Ascending aorta (tissue), 2 donors: ENCODE measurements at regions of chr16 and their contacts with region 1.

Region 1: GRCh38 chr16:57447186-57447962 is at the starts of genes CIAPIN1 and COQ9:
- DNase-seq: peak; percentile 76 to 96
- H3K4me3 ChIP-seq: peak within 1 kb of the TSS; percentile 90 to 95
- H3K27ac ChIP-seq: peak within 1 kb of the TSS; percentile 86 to 87
- H3K4me1 ChIP-seq: peaks cover 0 to 21% of the 10 kb centered on the region in 2 donors
- H3K27me3 ChIP-seq: no peaks in the 10 kb centered on the region
- CTCF ChIP-seq: no peak
- total RNA-seq, gene CIAPIN1: 28.7 TPM
- total RNA-seq, gene COQ9: 35.7 TPM

Region 2: GRCh38 chr16:57185944-57186871 is 261.2 kb before region 1 on chr16 and contains the starts of genes PSME3IP1 and RSPRY1:
- intact Hi-C with region 1: loop called (anchors 2 kb)
- DNase-seq: peak; percentile 98 to 99
- H3K4me3 ChIP-seq: peak within 1 kb of the TSS; percentile 78 to 94
- H3K27ac ChIP-seq: peak within 1 kb of the TSS; percentile 95 to 96
- H3K4me1 ChIP-seq: peaks cover 5 to 33% of the 10 kb centered on the region in 2 donors
- H3K27me3 ChIP-seq: no peaks in the 10 kb centered on the region
- CTCF ChIP-seq: no peak
- total RNA-seq, gene PSME3IP1: 32.6 TPM
- total RNA-seq, gene RSPRY1: 29.3 TPM

Region 3: GRCh38 chr16:57372372-57373116 is 74.8 kb before region 1 on chr16 and contains the start of gene CX3CL1:
- intact Hi-C with region 1: no loop called
- DNase-seq: peak in 1 of 2 donors; percentile 95
- H3K4me3 ChIP-seq: peak within 1 kb of the TSS; percentile 75 to 76
- H3K27ac ChIP-seq: peak within 1 kb of the TSS; percentile 94 to 99
- H3K4me1 ChIP-seq: peaks cover 16 to 37% of the 10 kb centered on the region in 2 donors
- H3K27me3 ChIP-seq: no peaks in the 10 kb centered on the region
- CTCF ChIP-seq: peak; percentile 20 to 56 (median 48)
- total RNA-seq, gene CX3CL1: 251 TPM

Region 4: DNA sequence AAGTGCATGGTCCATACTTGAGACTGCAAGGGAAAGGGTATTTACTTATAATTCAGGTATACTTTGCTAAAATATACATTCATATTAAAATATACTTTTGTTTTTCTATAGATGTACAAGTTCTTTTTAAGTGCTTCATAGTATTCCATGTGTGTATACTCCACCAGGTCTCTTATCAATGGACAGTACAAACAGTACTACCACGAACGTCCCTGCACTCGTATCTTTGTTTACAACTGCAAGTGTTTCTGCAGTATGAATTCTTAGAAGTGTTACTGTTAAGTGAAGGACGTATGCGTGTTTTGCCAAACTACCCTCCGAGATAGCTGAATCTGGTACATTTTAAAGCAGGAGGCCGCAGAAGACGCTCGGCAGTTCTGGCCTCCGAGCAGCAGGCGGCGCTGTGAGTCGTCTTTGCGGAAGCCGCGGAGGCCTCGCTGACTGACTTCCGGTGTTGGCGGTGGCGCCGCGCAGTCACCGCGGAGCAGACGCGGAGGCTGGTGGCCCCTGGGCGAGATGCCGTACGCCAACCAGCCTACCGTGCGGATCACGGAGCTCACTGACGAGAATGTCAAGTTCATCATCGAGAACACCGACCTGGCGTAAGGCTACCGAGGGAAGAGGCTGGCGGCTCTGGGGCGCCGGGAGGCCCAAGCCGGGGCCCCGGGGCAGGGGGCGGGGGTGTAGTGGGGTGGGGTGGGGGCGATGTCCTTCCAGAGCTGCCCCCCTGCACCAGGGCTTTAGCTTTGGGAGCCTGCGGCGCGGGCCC is 15.0 kb after region 1 on chr16 and contains the start of gene POLR2C:
- intact Hi-C with region 1: loop called (anchors 1 kb)
- DNase-seq: peak in 1 of 2 donors; percentile 93
- H3K4me3 ChIP-seq: peak within 1 kb of the TSS; percentile 88 to 100
- H3K27ac ChIP-seq: peak within 1 kb of the TSS; percentile 79 to 96
- H3K4me1 ChIP-seq: peaks cover 5 to 18% of the 10 kb centered on the region in 2 donors
- H3K27me3 ChIP-seq: no peaks in the 10 kb centered on the region
- CTCF ChIP-seq: peak; percentile 96 to 97 (median 97)
- total RNA-seq, gene POLR2C: 110 TPM

Region 5: GRCh38 chr16:57485916-57486857 is 38.8 kb after region 1 on chr16 and contains the start of gene DOK4:
- intact Hi-C with region 1: loop called (anchors 2 kb)
- DNase-seq: peak in 1 of 2 donors; percentile 88
- H3K4me3 ChIP-seq: peak within 1 kb of the TSS; percentile 84 to 93
- H3K27ac ChIP-seq: peak within 1 kb of the TSS; percentile 91 to 94
- H3K4me1 ChIP-seq: peaks cover 7 to 32% of the 10 kb centered on the region in 2 donors
- H3K27me3 ChIP-seq: no peaks in the 10 kb centered on the region
- CTCF ChIP-seq: no peak
- total RNA-seq, gene DOK4: 40.2 TPM

Region 6: GRCh38 chr16:57535680-57536305 is 88.4 kb after region 1 on chr16:
- intact Hi-C with region 1: loop called (anchors 5 kb)
- DNase-seq: peak; percentile 74 to 97
- H3K4me3 ChIP-seq: peak overlapping the region; percentile 92 to 93
- H3K27ac ChIP-seq: peak overlapping the region; percentile 89 to 90
- H3K4me1 ChIP-seq: peaks cover 19 to 24% of the 10 kb centered on the region in 2 donors
- H3K27me3 ChIP-seq: no peaks in the 10 kb centered on the region
- CTCF ChIP-seq: peak in 2 of 3 experiments; percentile 21 to 27